Activated CD4-positive, alpha-beta memory T cell treated with anti-CD3 and anti-CD28 coated beads, Interleukin-2, amount 10 ng/mL, durations not matched to agents 7 days and 5 days (primary cell): ENCODE measurements at regions of chr19 and their contacts with region 1.

Region 1: DNA sequence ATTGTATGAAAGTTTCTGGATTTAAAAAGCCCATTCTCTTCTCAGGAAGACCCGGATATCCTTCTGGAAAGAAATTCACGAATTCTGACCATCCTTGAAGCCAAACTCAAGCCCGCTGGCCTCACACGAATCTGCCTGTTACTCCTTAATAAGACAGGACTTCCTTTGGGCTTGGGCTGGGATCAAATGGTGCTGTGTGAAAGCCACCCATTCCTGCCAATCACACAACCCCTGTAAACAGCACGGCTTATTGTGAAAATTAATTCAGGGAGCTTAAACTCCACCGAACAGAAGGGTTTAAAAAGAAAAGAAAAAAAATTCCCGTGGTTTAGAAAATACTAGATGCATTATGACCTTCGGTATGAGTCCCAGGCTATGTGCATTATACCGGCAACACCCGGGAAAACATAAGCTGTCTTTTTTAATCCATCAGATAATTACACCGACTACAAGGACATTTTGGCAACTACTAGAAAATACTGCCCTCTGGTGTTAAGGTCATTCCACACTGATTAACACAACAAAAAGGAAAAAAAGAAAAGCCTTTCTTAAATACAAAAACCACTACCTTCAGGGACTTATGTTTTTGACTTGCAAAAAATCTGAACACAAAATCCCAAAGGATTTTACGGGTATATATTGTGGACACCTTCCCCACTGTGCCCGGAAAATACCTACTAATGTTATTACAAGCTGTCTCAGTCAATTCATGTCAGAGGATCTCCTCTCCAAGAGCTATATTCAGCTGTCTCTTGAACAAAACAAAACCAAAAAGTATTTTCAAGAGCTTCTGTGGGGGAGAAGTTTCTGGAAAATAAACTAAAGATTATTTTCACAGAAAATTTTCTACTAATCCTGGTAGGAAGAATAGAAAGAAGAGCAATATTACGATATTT is 76.0 kb upstream of the LSM14A start:
- DNase-seq: no peak
- H3K4me3 Mint-ChIP-seq: no peak overlapping the region
- H3K27ac Mint-ChIP-seq: no peak overlapping the region
- H3K4me1 Mint-ChIP-seq: no peaks in the 10 kb centered on the region
- H3K27me3 Mint-ChIP-seq: peaks cover 12% of the 10 kb centered on the region

Region 2: DNA sequence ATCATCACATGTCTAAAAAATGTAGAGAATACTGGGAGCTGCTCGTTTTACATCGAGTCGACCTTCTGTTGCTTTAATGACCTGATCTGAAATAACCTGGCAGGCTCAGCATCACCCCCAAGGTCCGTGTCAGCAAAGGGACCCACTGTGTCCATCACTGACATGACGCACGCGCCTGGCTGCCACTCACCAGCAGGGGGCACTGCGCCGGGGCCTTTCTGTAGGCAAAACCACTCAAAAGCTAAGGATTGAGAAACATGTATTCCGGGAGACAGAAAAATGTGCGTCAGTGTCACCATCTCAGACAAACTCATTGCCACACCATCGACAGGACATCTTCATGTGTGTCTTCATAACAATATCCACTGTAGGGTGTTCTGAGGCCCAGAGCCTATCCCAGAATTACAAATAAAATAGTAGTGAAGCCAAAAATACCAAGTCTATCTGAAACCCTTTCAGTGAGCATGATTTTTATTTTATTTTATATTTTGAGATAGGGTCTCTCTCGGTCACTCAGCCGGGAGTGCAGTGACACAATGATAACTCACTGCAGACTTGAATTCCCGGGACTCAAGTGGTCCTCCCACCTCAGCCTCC is 54.2 kb before region 1 on chr19:
- CTCF ChIA-PET with region 1: interaction called, 15 read pairs
- POLR2A ChIA-PET with region 1: no interaction called
- DNase-seq: peak; percentile 76
- H3K4me3 Mint-ChIP-seq: no peak overlapping the region
- H3K27ac Mint-ChIP-seq: no peak overlapping the region
- H3K4me1 Mint-ChIP-seq: no peaks in the 10 kb centered on the region
- H3K27me3 Mint-ChIP-seq: peaks cover 6% of the 10 kb centered on the region